AG04449 (cell line): ENCODE measurements at regions of chr5 and their contacts with region 1.

Region 1: GRCh38 chr5:151115274-151115905 is 34.6 kb upstream of the TNIP1 start:
- DNase-seq: no peak
- H3K4me3 ChIP-seq: no peak overlapping the region
- CTCF ChIP-seq: peak; percentile 91

Region 2: DNA sequence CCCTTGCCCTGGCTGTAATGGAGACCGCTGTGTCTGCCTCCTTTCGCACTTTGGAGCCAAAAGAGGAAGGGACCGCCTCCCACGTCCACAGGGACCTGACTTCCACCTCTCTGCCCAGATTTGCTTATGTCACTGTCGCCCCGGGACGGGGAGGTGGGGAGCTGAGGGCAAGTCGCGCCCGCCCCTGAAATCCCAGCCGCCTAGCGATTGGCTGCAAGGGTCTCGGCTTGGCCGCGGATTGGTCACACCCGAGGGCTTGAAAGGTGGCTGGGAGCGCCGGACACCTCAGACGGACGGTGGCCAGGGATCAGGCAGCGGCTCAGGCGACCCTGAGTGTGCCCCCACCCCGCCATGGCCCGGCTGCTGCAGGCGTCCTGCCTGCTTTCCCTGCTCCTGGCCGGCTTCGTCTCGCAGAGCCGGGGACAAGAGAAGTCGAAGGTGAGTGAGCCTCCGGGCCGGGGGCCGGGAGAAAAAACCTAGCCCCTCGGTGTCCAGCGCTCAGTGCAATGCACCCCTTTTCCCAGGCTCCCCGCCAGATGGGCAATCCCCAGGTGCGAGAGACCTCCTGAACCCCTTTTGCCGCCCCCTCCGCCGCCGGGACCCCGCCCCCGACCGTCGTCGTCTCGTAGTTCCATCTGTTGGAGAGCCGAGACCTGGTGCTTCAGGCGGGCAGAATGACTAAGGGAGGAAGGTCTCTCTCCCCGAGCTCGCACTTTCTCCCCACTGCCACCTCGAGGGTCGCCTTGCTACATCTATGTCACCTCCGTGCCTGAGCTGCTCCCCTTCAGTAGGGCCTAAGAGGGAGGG is 94.9 kb before region 1 on chr5 and contains the start of gene GPX3:
- CTCF ChIA-PET with region 1: interaction called, 12 read pairs
- POLR2A ChIA-PET with region 1: no interaction called
- DNase-seq: no peak
- H3K4me3 ChIP-seq: peak within 1 kb of the TSS; percentile 63
- CTCF ChIP-seq: no peak

Region 3: DNA sequence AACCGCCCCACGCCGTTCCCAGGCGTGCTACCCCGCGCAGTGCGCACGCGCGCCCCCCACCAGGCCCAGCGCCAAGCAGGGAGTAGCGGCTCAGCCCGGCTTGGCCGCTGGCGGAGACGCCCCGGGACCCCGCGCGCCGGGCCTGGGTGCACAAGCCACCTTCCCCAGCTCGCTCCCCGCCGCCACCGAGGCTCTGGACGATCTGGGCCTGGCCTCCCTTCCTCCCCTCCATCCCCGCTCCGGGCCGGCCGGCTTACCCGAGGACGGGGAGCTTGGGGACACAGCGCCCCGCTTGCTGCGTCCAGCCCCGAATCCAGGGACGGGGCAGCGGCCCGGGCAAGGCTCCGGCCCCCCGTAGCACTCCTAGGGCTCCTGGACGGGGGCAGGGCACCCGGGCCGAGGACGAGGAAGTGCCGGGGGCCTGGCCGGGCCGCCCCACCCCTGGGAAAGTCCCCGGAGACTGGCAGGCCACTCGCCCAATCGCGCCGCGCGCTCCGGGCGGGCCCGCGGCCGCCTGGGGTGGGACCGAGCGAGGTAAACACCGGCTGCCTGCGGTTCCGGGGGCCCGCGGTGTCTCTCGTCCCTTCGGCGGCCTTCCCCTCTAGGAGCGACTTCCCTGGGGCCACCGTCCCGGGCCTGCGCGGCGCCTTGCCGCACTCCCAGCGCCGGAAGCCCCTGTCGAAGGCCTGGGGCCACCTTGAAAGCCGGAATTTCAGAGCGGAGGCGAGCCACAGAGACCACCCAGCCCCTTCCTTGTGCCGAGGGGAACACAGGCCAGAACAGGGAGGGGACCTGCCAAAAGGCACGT is 34.6 kb before region 1 on chr5 and contains the start of gene TNIP1:
- CTCF ChIA-PET with region 1: interaction called, 36 read pairs
- POLR2A ChIA-PET with region 1: no interaction called
- DNase-seq: no peak
- H3K4me3 ChIP-seq: peak within 1 kb of the TSS; percentile 80
- CTCF ChIP-seq: no peak

Region 4: GRCh38 chr5:151101151-151101550 is 14.2 kb before region 1 on chr5:
- CTCF ChIA-PET with region 1: interaction called, 59 read pairs
- POLR2A ChIA-PET with region 1: no interaction called
- DNase-seq: no peak
- H3K4me3 ChIP-seq: no peak overlapping the region
- CTCF ChIP-seq: no peak

Region 5: DNA sequence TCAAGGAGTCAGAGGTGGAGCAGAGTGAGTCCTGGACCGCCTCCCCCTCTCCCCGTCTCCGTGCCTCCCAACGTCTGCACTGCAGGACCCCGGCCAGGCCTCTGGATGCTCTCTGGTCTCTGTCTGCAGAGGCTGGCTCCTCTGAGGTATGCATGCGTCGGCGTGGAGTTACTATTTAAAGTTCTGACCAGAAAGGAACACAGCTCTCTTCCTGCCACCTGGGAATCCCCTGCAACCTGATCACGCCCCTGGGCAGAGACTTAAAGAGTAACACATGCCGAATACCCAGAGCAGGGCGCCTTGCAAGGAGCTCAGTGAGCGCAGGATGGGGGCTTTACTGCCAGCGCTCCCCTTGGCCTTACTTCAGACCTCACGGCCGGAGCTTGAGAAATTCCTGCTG is 26.1 kb after region 1 on chr5:
- CTCF ChIA-PET with region 1: interaction called, 256 read pairs
- POLR2A ChIA-PET with region 1: no interaction called
- DNase-seq: no peak
- H3K4me3 ChIP-seq: no peak overlapping the region
- CTCF ChIP-seq: no peak

Region 6: GRCh38 chr5:151157426-151158286 is 42.3 kb after region 1 on chr5 and contains the start of gene ANXA6:
- CTCF ChIA-PET with region 1: interaction called, 126 read pairs
- POLR2A ChIA-PET with region 1: interaction called, 3 read pairs
- DNase-seq: no peak
- H3K4me3 ChIP-seq: peak within 1 kb of the TSS; percentile 91
- CTCF ChIP-seq: no peak

Region 7: DNA sequence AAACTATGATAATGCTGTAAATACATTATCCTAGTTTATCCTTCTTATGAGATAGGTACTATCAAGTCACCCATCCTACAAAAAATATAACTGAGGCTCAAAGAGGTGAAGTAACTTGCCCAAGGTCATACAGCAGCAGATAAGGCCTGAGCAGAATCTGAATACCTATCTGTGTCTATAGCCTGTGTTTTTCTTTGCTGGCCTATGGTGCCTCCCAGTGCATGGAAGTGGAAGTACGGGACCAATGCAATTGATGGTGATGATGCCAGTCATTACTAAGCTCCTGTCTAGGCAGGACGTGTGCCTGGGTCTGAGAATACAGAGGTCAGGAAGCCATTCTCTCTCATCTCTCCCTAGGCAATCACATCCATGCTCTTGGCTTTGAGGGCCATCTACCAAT is 407.9 kb after region 1 on chr5:
- CTCF ChIA-PET with region 1: interaction called, 11 read pairs
- POLR2A ChIA-PET with region 1: no interaction called
- DNase-seq: no peak
- H3K4me3 ChIP-seq: no peak overlapping the region
- CTCF ChIP-seq: peak; percentile 52

Region 8: DNA sequence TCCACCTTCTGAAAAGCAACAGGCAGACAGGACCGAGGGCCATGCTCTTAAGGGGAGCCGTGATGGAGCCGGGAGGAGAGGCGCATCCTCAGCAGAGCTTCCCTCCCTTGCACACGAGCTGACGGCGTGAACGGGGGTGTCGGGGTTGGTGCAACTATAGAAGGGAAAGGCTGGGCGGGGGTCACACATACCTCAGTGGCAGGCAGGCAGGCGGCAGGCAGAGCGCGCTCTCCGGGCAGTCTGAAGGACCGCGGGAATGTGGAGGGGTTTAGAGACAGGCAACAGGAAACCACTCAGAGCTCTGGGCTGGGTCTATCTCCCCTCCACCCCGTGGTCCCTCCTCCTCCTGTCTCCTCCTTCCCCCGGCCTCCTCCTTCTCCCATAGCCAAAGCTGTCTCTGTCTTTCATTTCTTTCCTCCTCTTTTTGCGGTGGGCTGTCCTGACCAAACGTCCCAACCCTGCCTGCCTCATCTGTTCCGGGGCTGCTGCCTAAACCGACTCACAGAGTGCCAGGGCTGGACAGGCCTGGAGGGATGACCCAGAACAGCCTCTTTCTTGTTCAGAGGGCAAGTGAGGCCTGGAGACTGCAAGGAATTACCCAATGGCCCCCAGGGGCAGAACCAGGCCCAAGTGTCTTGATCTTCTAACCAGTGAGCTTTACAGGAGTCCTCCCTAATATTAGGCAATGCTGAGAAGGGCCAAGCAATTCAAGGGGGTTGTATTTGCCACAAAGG is 571.5 kb after region 1 on chr5 and contains the start of gene SPARC:
- CTCF ChIA-PET with region 1: no interaction called
- POLR2A ChIA-PET with region 1: no interaction called
- DNase-seq: peak; percentile 87
- H3K4me3 ChIP-seq: peak within 1 kb of the TSS; percentile 100
- CTCF ChIP-seq: peak; percentile 4